ENCODE measurements at regions of chr1 and their contacts with region 1.

Region 1: DNA sequence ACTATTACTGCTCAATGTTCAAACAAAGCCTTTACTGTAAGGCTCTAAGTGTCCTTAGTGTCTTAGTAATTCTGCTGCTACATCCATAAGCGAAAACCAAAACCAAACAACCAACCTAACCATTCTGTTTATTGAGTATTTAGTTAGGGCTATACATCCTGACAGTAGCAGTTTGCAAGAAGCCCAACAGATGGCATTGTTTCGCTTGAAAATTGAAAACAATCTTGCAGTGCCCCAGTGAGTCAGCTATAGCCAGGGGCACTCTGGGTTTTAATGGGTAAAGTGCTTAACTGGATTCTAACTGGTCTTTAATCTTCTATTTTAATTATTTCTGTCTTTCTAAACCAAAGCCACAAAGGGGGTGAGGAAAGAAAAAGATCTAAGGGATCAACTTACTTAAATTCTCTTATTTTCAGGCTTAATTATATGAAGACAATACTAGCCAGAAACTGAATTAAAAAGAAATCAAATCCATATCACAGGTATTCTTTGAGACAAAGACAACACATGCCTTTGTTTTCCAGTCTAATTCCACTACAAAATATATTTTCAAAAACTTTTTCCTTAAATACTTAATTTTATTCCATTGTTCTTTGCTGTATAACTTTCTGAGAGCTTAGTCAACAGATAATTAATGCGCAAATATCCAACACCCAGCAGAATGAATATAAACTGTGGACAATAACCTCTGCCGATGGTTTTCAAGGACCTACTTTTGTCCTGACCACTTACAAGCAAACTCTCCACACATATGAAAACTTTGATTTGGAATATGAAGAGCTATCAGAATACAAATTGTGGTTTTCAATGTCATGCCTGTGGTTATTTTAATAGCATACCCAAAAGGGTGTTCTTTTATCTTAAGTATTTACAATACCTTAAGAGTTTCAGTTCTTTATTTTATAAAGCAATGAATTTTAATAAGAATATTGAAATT is 15.2 kb downstream of the POGZ start:
- DNase-seq: peak; percentile 46
- ATAC-seq: peak; percentile 91
- H3K4me3 Mint-ChIP-seq: no peak overlapping the region
- H3K27ac Mint-ChIP-seq: peak overlapping the region; percentile 92; the same call in 1 of the 2 replicates
- H3K4me1 Mint-ChIP-seq: peaks cover 18% of the 10 kb centered on the region
- H3K27me3 Mint-ChIP-seq: no peaks in the 10 kb centered on the region
- CTCF ChIP-seq: peak; percentile 43

Region 2: GRCh38 chr1:151210830-151211229 is 233.3 kb before region 1 on chr1:
- CTCF ChIA-PET with region 1: no interaction called
- POLR2A ChIA-PET with region 1: no interaction called
- DNase-seq: no peak
- ATAC-seq: no peak
- H3K4me3 Mint-ChIP-seq: no peak overlapping the region
- H3K27ac Mint-ChIP-seq: no peak overlapping the region
- H3K4me1 Mint-ChIP-seq: no peaks in the 10 kb centered on the region
- H3K27me3 Mint-ChIP-seq: no peaks in the 10 kb centered on the region
- CTCF ChIP-seq: no peak

Region 3: GRCh38 chr1:151311589-151312331 is 132.4 kb before region 1 on chr1:
- CTCF ChIA-PET with region 1: no interaction called
- POLR2A ChIA-PET with region 1: no interaction called
- DNase-seq: no peak
- ATAC-seq: no peak
- H3K4me3 Mint-ChIP-seq: no peak overlapping the region
- H3K27ac Mint-ChIP-seq: no peak overlapping the region
- H3K4me1 Mint-ChIP-seq: peaks cover 18% of the 10 kb centered on the region
- H3K27me3 Mint-ChIP-seq: no peaks in the 10 kb centered on the region
- CTCF ChIP-seq: no peak

Region 4: DNA sequence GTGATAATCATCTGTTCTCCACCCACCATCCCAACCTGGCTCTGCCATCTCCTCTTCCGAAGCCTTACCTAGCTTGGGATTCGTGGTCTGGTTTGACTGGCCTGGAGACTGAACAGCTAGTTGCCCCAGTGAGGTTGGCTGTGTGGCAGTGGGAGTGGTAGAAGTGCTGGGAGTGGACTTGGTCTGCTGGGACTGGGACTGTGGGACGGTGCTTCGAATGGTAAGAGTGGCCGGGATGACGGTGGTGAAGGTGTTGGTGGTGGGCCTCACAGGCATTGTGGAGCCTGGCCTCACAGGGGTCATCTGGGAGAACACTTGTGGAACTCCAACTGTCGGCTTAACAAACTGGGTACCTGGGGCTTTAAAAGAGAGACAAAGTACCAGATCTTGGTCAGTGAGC is 16.1 kb before region 1 on chr1:
- CTCF ChIA-PET with region 1: no interaction called
- POLR2A ChIA-PET with region 1: no interaction called
- DNase-seq: no peak
- ATAC-seq: no peak
- H3K4me3 Mint-ChIP-seq: no peak overlapping the region
- H3K27ac Mint-ChIP-seq: no peak overlapping the region
- H3K4me1 Mint-ChIP-seq: no peaks in the 10 kb centered on the region
- H3K27me3 Mint-ChIP-seq: no peaks in the 10 kb centered on the region
- CTCF ChIP-seq: no peak

Region 5: DNA sequence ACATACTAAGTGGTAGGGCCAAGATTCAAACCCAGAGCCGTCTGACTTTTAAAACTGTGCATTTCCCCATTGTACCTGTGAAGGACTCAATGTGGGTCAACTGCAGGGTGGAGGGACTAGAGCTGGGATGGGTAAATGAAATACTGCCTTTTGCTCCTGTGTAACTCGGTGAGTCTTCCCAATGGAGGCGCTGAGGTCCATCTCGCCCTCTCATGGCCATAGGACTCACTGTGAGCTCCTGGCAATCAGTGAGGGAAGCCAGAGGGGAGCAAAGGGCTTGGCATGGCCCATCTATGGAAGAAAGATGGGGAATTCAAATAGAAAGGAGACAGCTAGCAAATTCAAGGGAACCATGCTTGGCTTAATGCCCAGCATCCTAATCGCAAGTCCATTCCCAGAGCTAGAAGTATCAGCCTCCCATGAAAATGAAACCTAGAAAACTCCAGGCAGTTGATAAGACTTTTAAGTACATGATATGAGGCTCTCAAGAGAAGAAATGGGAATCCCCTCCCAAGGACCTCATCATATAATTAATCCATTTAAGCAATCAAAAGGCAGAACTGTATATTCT is 41.7 kb after region 1 on chr1:
- CTCF ChIA-PET with region 1: interaction called, 10 read pairs
- POLR2A ChIA-PET with region 1: no interaction called
- DNase-seq: peak; percentile 52
- ATAC-seq: peak; percentile 97
- H3K4me3 Mint-ChIP-seq: no peak overlapping the region
- H3K27ac Mint-ChIP-seq: peak overlapping the region; percentile 57; the same call in 1 of the 2 replicates
- H3K4me1 Mint-ChIP-seq: no peaks in the 10 kb centered on the region
- H3K27me3 Mint-ChIP-seq: no peaks in the 10 kb centered on the region; the same call in 1 of the 2 replicates
- CTCF ChIP-seq: no peak

Region 6: DNA sequence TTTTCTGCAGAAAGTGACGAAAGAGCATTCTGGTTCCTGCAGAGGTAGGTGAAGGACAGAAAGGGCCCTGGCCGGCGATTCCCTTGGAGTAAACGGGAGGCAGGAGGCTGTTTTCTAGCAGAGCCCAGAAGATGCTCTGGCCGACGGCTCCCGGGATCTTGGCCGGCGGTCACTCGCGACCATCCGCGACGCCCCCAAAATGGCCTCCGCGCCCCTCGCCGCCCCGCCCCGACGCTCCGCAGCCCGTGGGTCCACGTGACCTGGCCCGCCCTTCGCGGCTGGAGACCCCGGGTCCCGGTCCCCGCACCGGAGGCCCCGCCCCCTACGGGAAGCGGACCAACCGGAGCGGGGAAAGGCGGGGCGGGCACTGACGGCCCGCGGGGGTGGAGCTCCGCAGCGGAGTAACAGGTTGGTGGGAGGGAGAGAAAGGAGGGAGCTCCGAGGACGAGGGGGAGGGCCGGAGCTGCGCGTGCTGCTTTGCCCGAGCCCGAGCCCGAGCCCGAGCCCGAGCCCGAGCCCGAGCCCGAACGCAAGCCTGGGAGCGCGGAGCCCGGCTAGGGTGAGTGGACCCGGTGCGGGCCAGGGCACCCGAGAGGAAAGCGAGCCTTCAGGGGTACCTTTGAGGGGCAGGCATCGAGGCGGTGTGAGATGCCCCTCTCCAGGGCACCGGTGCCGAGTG is 67.0 kb after region 1 on chr1 and contains the start of gene CGN:
- CTCF ChIA-PET with region 1: interaction called, 12 read pairs
- POLR2A ChIA-PET with region 1: interaction called, 5 read pairs
- DNase-seq: peak; percentile 96
- ATAC-seq: peak; percentile 87
- H3K4me3 Mint-ChIP-seq: peak within 1 kb of the TSS; percentile 84
- H3K27ac Mint-ChIP-seq: peak within 1 kb of the TSS; percentile 97
- H3K4me1 Mint-ChIP-seq: peaks cover 46% of the 10 kb centered on the region
- H3K27me3 Mint-ChIP-seq: no peaks in the 10 kb centered on the region
- CTCF ChIP-seq: no peak
- total RNA-seq, gene CGN: 52.4 to 68.7 TPM (median 55.6 TPM) in 3 replicates

Region 7: GRCh38 chr1:151574545-151575529 is 130.7 kb after region 1 on chr1:
- CTCF ChIA-PET with region 1: no interaction called
- POLR2A ChIA-PET with region 1: no interaction called
- DNase-seq: no peak
- ATAC-seq: no peak
- H3K4me3 Mint-ChIP-seq: no peak overlapping the region
- H3K27ac Mint-ChIP-seq: no peak overlapping the region
- H3K4me1 Mint-ChIP-seq: peaks cover 11% of the 10 kb centered on the region
- H3K27me3 Mint-ChIP-seq: no peaks in the 10 kb centered on the region
- CTCF ChIP-seq: no peak

Measured in WTC11 (cell line).